ENCODE measurements at regions of chr19 and their contacts with region 1.

Region 1: DNA sequence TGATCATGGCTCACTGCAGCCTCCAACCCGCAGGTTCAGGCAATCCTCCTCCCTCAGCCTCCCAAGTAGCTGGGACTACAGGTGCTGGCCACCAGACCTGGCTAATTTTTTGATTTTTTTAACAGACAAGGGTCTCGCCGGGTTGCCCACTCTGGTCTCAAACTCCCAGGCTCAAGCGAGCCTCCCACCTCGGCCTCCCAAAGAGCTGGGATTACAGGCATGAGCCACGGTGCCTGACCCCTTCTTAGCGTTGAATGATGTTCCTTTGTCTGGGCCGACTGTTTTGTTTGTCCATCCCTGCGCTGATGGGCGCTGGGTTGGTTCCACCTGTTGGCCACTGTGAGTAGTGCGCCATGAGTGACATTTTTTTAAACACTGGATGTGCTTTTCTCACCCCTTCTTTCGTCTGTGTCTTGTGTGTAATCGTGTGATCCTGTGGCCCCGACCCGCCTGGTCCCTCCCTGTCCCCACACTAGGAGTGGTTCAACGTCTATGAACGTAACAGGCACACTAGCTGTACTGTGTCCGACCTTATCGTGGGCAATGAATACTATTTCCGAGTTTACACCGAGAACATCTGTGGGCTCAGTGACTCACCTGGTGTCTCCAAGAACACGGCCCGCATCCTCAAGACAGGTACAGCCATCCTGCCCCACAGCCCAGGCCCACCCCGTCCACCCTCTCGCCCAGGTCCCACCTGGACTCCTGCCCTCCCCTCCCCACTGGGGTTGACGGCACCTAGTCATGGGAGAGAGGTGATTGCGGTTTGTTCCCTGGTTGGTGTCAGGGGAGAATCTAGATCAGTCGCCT is 15.0 kb upstream of the EMC10 start:
- DNase-seq: peak; percentile 77
- ATAC-seq: peak; percentile 72
- H3K4me3 Mint-ChIP-seq: no peak overlapping the region
- H3K27ac Mint-ChIP-seq: no peak overlapping the region
- H3K4me1 Mint-ChIP-seq: peaks cover 6% of the 10 kb centered on the region
- H3K27me3 Mint-ChIP-seq: no peaks in the 10 kb centered on the region; the same call in 1 of the 2 replicates
- CTCF ChIP-seq: peak; percentile 72

Region 2: DNA sequence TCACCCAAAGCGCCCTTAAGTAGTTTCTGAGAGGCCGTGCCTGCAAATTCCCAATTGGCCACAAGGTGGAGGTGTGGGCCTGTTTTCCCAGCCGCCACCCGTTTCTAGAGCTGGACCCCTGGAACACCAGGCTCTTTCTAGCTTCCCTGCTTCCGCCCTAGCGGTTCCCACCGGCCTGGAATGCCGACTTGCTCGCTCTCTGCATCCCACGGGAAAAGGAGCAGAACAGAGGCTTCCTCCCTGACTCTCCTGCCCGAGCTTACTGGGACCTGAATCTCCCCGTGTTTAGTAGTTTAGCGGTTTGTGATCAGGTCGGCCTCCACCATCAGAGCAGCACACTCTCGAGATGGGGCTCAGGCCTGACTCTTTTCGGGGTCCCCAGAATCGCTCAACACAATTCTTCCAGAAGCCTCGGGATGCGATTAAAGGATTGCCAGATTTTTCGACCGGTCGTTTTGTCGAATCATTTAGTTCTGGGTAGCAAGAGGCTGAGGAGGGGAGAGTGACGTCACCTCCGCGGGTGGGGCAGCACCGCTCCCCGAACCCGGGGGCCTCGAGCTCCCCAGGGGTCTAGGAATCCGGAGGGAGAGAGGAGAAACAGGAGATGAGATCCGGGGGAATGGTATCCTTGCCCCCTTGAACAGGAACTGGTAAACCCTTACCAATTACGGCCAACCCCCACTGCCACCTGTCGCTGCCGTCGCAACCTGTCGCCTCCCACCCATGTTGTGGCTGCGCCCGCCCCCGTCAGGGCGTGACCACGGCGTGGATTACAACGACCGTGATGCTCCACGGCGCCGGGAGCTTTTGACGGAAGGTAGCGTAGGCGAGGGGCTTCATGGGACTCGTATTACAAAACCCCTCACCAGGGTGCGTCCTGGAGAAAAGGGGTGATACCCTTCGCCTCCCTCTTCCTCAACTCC is 103.8 kb before region 1 on chr19:
- CTCF ChIA-PET with region 1: interaction called, 25 read pairs
- POLR2A ChIA-PET with region 1: no interaction called
- DNase-seq: peak; percentile 86
- ATAC-seq: peak; percentile 86
- H3K4me3 Mint-ChIP-seq: no peak overlapping the region; the same call in 1 of the 2 replicates
- H3K27ac Mint-ChIP-seq: no peak overlapping the region
- H3K4me1 Mint-ChIP-seq: peaks cover 2% of the 10 kb centered on the region; the same call in 1 of the 2 replicates
- H3K27me3 Mint-ChIP-seq: peaks cover 21% of the 10 kb centered on the region
- CTCF ChIP-seq: peak; percentile 78

Region 3: GRCh38 chr19:50376166-50377050 is 84.9 kb before region 1 on chr19 and contains the start of gene NR1H2:
- CTCF ChIA-PET with region 1: interaction called, 20 read pairs
- POLR2A ChIA-PET with region 1: interaction called, 4 read pairs
- DNase-seq: peak; percentile 95
- ATAC-seq: peak; percentile 80
- H3K4me3 Mint-ChIP-seq: peak within 1 kb of the TSS; percentile 99
- H3K27ac Mint-ChIP-seq: peak within 1 kb of the TSS; percentile 100
- H3K4me1 Mint-ChIP-seq: peaks cover 3% of the 10 kb centered on the region; the same call in 1 of the 2 replicates
- H3K27me3 Mint-ChIP-seq: no peaks in the 10 kb centered on the region; the same call in none of the 2 replicates
- CTCF ChIP-seq: no peak
- total RNA-seq, gene NR1H2: 40.5 to 45.8 TPM (median 41.0 TPM) in 3 replicates

Region 4: GRCh38 chr19:50414864-50415660 is 46.2 kb before region 1 on chr19:
- CTCF ChIA-PET with region 1: interaction called, 13 read pairs
- POLR2A ChIA-PET with region 1: interaction called, 3 read pairs
- DNase-seq: peak; percentile 95
- ATAC-seq: peak; percentile 83
- H3K4me3 Mint-ChIP-seq: no peak overlapping the region
- H3K27ac Mint-ChIP-seq: no peak overlapping the region
- H3K4me1 Mint-ChIP-seq: peaks cover 18% of the 10 kb centered on the region
- H3K27me3 Mint-ChIP-seq: no peaks in the 10 kb centered on the region; the same call in 1 of the 2 replicates
- CTCF ChIP-seq: peak; percentile 93

Region 5: DNA sequence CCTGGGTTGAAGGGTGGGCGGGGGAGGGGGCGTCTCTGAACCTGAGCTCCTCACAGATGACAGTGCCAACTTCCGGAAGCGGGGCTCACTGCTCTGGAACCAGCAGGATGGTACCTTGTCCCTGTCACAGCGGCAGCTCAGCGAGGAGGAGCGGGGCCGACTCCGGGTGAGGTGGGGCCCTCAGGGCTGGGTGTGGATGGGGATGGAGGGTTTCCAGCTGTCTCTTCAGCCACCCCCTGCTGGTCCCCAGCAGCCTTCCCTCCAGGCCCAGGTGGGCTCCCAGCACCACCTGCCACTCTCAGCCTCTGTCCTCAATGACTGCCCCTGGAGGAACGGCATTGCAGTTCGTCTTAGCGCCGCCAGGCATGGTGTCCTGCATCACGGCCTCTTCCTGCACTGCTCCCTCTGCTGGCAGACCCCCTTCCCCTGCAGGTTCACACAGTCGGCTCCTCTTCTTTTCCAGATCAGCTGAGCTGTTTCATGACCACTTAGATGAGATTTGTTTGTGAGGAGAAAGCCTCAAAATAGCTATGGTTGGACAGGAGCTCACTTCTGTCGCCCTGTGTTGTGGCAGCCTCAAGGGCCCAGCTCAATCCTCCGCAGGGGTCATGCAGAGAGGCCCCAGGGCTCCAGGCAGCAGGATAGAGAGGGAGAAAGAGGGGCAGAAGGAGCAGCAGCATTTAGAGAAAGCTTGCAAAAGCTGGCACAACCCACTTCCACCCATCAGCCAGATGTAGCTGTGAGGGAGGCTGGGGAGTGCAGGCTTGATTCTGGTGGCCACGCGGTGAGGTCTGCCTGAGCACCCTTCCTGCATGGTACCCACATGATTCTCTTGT is 17.8 kb after region 1 on chr19:
- CTCF ChIA-PET with region 1: interaction called, 15 read pairs
- POLR2A ChIA-PET with region 1: no interaction called
- DNase-seq: peak; percentile 77
- ATAC-seq: peak; percentile 18
- H3K4me3 Mint-ChIP-seq: no peak overlapping the region
- H3K27ac Mint-ChIP-seq: no peak overlapping the region
- H3K4me1 Mint-ChIP-seq: peaks cover 9% of the 10 kb centered on the region
- H3K27me3 Mint-ChIP-seq: no peaks in the 10 kb centered on the region; the same call in 1 of the 2 replicates
- CTCF ChIP-seq: peak; percentile 37; the same call in 1 of the 2 replicates